Activated CD4-positive, alpha-beta T cell treated with anti-CD3 and anti-CD28 coated beads for 36 hours (primary cell): ENCODE measurements at regions of chr16 and their contacts with region 1.

Region 1: DNA sequence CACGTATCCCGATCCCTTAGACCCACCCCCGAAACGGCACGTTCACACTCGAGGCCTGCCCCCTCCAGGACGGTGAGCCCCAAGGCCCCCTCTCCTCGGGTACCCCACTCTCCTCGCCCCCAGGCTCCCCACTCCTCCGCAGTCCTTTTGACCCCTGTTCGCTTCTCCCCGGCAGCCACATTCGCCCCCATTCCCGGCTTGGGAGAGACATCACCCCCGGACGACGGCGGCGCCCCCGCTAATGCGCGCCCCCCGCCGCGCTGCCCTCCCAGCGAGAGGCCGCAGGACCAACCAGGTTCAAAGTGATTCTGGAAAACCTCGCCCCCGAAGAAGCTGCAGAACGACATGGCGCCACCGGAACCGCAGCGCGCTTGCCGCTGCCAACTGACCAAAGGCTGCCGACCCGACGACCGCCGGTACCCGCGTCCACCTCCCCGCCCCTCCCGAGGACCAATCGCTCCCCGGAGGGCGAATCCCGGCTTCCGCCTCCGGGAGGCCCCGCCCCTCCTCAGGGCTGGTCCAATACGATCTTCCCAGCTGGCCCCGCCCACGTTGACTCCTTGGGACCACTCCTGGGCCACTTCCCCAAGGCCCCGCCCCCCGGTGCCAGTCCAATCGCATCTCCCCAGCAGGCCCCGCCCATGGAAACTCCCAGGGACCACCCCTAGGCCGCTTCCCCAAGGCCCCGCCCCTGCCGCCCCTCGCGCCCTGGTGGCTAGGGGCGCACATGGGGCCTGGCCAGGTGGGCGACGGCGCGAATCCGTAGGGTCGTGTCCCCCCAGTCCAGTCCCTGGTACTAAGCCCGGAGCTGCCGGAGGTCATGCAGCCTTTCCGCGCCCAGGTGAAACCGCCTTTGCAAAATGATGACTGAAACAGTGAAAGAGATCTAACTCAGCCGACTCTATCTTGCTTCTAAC is at the start of gene MSRB1:
- DNase-seq: peak; percentile 100
- ATAC-seq: peak; percentile 97
- H3K4me3 Mint-ChIP-seq: peak within 1 kb of the TSS; percentile 80
- H3K27ac Mint-ChIP-seq: peak within 1 kb of the TSS; percentile 82
- H3K4me1 Mint-ChIP-seq: peaks cover 26% of the 10 kb centered on the region
- H3K27me3 Mint-ChIP-seq: no peaks in the 10 kb centered on the region
- total RNA-seq, gene MSRB1: 17.3 to 21.8 TPM

Region 2: GRCh38 chr16:1105888-1106620 is 837.0 kb before region 1 on chr16:
- CTCF ChIA-PET with region 1: no interaction called
- POLR2A ChIA-PET with region 1: no interaction called
- intact Hi-C with region 1: no loop called
- DNase-seq: peak; percentile 74
- ATAC-seq: peak; percentile 82
- H3K4me3 Mint-ChIP-seq: no peak overlapping the region
- H3K27ac Mint-ChIP-seq: no peak overlapping the region
- H3K4me1 Mint-ChIP-seq: no peaks in the 10 kb centered on the region
- H3K27me3 Mint-ChIP-seq: peaks cover 10% of the 10 kb centered on the region

Region 3: GRCh38 chr16:1342526-1343427 is 600.3 kb before region 1 on chr16:
- CTCF ChIA-PET with region 1: no interaction called
- POLR2A ChIA-PET with region 1: no interaction called
- intact Hi-C with region 1: loop called in 1 of 2 experiments (anchors 10 kb)
- DNase-seq: peak; percentile 96
- ATAC-seq: peak; percentile 98
- H3K4me3 Mint-ChIP-seq: peak overlapping the region; percentile 47
- H3K27ac Mint-ChIP-seq: no peak overlapping the region
- H3K4me1 Mint-ChIP-seq: peaks cover 17% of the 10 kb centered on the region
- H3K27me3 Mint-ChIP-seq: no peaks in the 10 kb centered on the region

Region 4: DNA sequence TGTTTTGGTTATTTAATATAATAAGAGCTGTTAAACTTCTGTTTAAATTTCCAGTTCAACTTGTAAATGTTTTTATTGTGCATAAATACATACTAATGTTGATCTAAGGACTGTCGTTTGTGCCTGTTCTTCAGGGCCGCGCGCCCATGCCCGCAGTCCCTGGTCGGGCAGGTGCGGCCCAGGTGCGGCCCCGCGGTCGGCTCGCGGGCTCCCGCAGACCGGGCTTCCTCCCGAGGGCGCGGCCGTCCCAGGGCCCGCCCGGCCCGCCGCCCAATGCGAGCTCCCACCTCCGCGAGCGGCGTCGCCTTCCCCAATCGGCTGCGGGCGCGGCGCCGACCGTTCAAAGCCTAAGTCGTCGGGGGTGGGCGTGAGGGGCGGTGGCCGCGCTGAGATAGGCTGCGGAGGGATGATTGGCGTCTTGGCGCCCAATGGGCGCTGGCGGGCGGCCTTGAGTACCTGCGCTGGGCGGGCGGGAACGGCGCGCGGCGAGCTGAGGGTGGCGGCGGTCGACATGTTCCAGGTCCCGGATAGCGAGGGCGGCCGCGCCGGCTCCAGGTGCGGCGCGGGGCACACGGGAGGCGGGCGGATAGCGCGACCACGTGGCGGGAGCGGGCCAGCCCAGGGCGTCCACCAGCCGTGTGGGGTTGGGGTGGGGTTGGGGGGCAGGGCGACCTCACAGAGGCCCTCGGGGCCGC is 265.1 kb before region 1 on chr16 and contains the start of gene JPT2:
- CTCF ChIA-PET with region 1: no interaction called
- POLR2A ChIA-PET with region 1: no interaction called
- intact Hi-C with region 1: loop called in 1 of 2 experiments (anchors 1 kb)
- DNase-seq: peak; percentile 98
- ATAC-seq: peak; percentile 99
- H3K4me3 Mint-ChIP-seq: peak within 1 kb of the TSS; percentile 94
- H3K27ac Mint-ChIP-seq: peak within 1 kb of the TSS; percentile 89
- H3K4me1 Mint-ChIP-seq: peaks cover 26% of the 10 kb centered on the region
- H3K27me3 Mint-ChIP-seq: no peaks in the 10 kb centered on the region
- total RNA-seq, gene JPT2: 77.1 to 111 TPM

Region 5: GRCh38 chr16:1782352-1783091 is 160.5 kb before region 1 on chr16 and contains the starts of genes NUBP2 and SPSB3:
- CTCF ChIA-PET with region 1: no interaction called
- POLR2A ChIA-PET with region 1: interaction called, 10 read pairs
- intact Hi-C with region 1: loop called in 1 of 2 experiments (anchors 1 kb)
- DNase-seq: peak; percentile 99
- ATAC-seq: peak; percentile 93
- H3K4me3 Mint-ChIP-seq: peak within 1 kb of the TSS; percentile 94
- H3K27ac Mint-ChIP-seq: peak within 1 kb of the TSS; percentile 85
- H3K4me1 Mint-ChIP-seq: peaks cover 26% of the 10 kb centered on the region
- H3K27me3 Mint-ChIP-seq: no peaks in the 10 kb centered on the region
- total RNA-seq, gene NUBP2: 34.4 to 42.4 TPM
- total RNA-seq, gene SPSB3: 12.5 to 13.6 TPM

Region 6: GRCh38 chr16:1959269-1960049 is 16.4 kb after region 1 on chr16 and contains the start of gene NDUFB10:
- CTCF ChIA-PET with region 1: interaction called, 3 read pairs
- POLR2A ChIA-PET with region 1: interaction called, 14 read pairs
- intact Hi-C with region 1: loop called (anchors 1 kb)
- DNase-seq: peak; percentile 96
- ATAC-seq: peak; percentile 77
- H3K4me3 Mint-ChIP-seq: peak within 1 kb of the TSS; percentile 96
- H3K27ac Mint-ChIP-seq: peak within 1 kb of the TSS; percentile 95
- H3K4me1 Mint-ChIP-seq: peaks cover 34% of the 10 kb centered on the region
- H3K27me3 Mint-ChIP-seq: no peaks in the 10 kb centered on the region
- total RNA-seq, gene NDUFB10: 113 to 118 TPM

Region 7: DNA sequence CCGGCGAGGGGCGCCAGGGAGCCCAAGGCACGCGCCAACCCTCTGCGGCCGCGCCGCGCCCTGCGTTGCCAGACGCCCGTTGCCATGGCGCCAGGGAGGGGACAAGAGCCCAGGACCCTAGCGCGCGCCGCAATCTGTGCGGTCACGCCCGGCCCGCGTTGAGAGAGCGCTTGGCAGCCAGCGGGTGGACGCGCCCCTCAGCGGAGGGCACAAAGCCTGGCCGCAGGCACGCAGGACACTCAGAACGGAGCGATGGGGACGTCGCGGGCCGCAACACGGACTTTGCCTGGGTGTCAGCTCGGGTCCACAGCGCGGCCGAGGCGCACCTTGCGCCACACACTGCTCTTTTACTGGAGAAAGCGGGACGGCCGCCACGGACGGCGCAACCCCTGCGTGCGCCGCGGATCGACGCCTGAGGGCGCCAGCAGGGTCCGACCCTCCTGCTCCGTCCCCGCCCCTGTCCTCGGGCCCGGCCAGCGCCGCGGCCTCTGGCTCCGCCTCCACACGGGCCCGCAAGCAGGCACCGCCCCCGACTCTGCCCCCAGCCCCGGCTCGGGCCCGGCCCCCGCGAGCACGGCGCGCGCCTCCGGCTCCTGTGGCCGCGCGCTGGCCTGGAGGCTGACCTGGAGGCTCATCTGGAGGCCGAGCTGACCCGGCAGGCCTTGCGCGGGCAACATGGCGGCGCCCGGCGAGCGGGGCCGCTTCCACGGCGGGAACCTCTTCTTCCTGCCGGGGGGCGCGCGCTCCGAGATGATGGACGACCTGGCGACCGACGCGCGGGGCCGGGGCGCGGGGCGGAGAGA is 40.7 kb after region 1 on chr16 and contains the start of gene GFER:
- CTCF ChIA-PET with region 1: interaction called, 5 read pairs
- POLR2A ChIA-PET with region 1: no interaction called
- intact Hi-C with region 1: loop called in 1 of 2 experiments (anchors 1 kb)
- DNase-seq: peak; percentile 84
- ATAC-seq: peak; percentile 84
- H3K4me3 Mint-ChIP-seq: peak within 1 kb of the TSS; percentile 85
- H3K27ac Mint-ChIP-seq: peak within 1 kb of the TSS; percentile 55
- H3K4me1 Mint-ChIP-seq: peaks cover 16% of the 10 kb centered on the region
- H3K27me3 Mint-ChIP-seq: peaks cover 20% of the 10 kb centered on the region
- total RNA-seq, gene GFER: 25.0 to 25.8 TPM

Region 8: DNA sequence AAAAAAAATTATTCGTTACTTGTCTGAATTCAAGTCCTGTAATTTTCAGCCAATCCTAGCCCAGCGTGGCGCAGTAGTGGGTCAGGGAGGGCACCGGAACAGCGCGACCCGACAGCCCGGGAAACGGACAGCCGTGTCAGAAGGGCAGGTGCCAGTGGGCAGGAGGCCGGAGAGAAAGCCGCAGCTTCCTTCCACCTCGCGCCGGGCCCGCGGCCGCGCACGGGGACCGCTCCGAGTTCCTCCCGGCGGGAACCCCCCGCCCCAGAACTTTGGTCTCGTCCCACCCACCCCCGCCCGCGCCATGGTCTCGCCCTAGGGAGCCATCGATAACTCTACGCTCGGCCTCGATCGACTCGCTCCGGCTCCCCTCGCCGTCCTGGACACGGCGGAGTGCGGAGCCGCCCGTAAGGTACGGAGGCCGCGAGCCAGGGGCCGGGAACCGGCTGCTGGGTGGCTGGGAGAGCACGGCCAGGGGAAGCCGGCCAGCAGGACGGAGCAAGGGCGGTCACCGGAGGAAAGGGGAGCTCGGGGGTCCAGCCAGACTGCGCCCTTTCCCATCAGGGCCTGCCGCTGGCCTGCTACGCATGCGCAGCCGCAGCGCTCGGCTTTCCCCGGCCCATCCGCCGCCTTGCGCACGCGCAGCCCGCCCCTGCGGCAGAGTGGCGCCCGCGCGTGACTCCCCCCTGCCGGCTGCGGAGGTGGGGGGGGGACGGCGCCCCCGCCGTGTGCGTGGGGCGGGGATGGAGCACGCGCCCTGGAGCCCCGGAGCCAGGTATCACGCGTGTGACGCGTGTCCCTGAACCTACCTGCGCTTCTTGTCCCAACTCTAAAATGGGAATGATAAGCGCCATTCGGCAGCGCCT is 262.3 kb after region 1 on chr16 and contains the start of gene MLST8:
- CTCF ChIA-PET with region 1: no interaction called
- POLR2A ChIA-PET with region 1: no interaction called
- intact Hi-C with region 1: loop called in 1 of 2 experiments (anchors 1 kb)
- DNase-seq: peak; percentile 92
- ATAC-seq: peak; percentile 84
- H3K4me3 Mint-ChIP-seq: peak within 1 kb of the TSS; percentile 83
- H3K27ac Mint-ChIP-seq: peak within 1 kb of the TSS; percentile 84
- H3K4me1 Mint-ChIP-seq: peaks cover 16% of the 10 kb centered on the region
- H3K27me3 Mint-ChIP-seq: no peaks in the 10 kb centered on the region
- total RNA-seq, gene MLST8: 61.3 to 76.1 TPM